Pancreas (tissue), 10 donors: ENCODE measurements at regions of chr11 and their contacts with region 1.

Region 1: GRCh38 chr11:60700689-60701480 is 1.5 kb downstream of the MS4A8 start:
- DNase-seq: peak in 3 of 6 donors; percentile 25 to 68 (median 50)
- ATAC-seq: peak; percentile 59 to 77 (median 74)
- H3K4me3 ChIP-seq: no peak overlapping the region
- H3K27ac ChIP-seq: no peak overlapping the region
- H3K4me1 ChIP-seq: peaks cover 0 to 18% (median 13%) of the 10 kb centered on the region in 3 donors
- H3K27me3 ChIP-seq: no peaks in the 10 kb centered on the region
- CTCF ChIP-seq: peak; percentile 23 to 53 (median 44)

Region 2: GRCh38 chr11:60756307-60757032 is 55.6 kb after region 1 on chr11 and contains the start of gene MS4A15:
- intact Hi-C with region 1: loop called in 1 of 3 experiments (anchors 10 kb)
- DNase-seq: peak in 2 of 6 donors; percentile 22 to 46
- ATAC-seq: peak; percentile 77 to 91 (median 86)
- H3K4me3 ChIP-seq: no peak within 1 kb of the TSS
- H3K27ac ChIP-seq: no peak within 1 kb of the TSS
- H3K4me1 ChIP-seq: peaks cover 0 to 5% (median 3%) of the 10 kb centered on the region in 3 donors
- H3K27me3 ChIP-seq: no peaks in the 10 kb centered on the region
- CTCF ChIP-seq: peak; percentile 23 to 51 (median 34)
- total RNA-seq, gene MS4A15: 0.09 TPM in 1 of 6 donors, not detected in the others